ENCODE measurements at regions of chr17 and their contacts with region 1.

Region 1: GRCh38 chr17:51097708-51098446 is 22.8 kb downstream of the SPAG9 start:
- DNase-seq: no peak
- ATAC-seq: peak; percentile 37
- H3K4me3 Mint-ChIP-seq: no peak overlapping the region
- H3K27ac Mint-ChIP-seq: no peak overlapping the region
- H3K4me1 Mint-ChIP-seq: peaks cover 30% of the 10 kb centered on the region
- H3K27me3 Mint-ChIP-seq: no peaks in the 10 kb centered on the region

Region 2: GRCh38 chr17:50841949-50842354 is 255.9 kb before region 1 on chr17:
- CTCF ChIA-PET with region 1: no interaction called
- POLR2A ChIA-PET with region 1: no interaction called
- intact Hi-C with region 1: no loop called
- DNase-seq: peak; percentile 77
- ATAC-seq: peak; percentile 85
- H3K4me3 Mint-ChIP-seq: no peak overlapping the region
- H3K27ac Mint-ChIP-seq: no peak overlapping the region
- H3K4me1 Mint-ChIP-seq: no peaks in the 10 kb centered on the region
- H3K27me3 Mint-ChIP-seq: no peaks in the 10 kb centered on the region

Region 3: DNA sequence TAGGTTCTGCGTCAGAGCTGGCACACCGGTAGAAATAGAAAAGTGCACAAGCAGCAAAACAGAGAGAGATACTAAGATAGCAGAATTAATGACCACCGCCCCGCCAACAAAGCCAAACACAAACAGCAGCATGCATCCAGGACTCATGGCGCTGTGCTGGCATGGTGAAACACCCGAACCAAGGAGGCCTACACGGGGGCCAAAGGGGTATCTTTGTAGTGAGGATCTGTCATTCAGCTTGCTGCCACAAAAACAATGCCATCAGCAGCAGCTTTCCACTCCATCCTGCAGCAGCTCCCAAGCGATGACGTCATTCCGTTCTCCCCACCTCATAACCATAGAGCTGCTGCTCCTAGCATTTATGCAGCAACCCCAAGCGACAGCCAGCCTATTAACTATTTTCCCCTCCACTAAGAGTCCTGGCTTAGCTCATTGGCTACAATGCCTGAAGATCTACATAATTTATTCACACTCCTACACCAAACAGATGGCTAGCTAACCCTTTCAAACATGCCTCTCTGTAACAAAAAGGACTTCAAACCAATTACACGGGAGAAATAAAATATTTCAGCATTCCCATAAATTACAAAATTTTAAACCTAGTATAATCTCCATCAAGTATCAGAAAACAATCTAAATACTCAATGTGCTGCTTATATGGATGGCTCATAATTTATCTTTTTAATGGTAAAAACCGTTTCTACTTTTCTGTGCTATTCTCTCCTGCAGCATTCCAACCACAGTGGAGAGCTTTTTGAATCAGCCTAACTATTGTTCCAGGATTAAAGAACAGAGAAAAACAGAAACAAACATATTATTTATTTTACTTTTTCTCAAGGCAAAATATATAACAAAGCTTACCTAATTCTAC is 51.1 kb before region 1 on chr17:
- CTCF ChIA-PET with region 1: no interaction called
- POLR2A ChIA-PET with region 1: no interaction called
- intact Hi-C with region 1: loop called in 1 of 2 experiments (anchors 10 kb)
- DNase-seq: no peak
- ATAC-seq: no peak
- H3K4me3 Mint-ChIP-seq: no peak overlapping the region
- H3K27ac Mint-ChIP-seq: no peak overlapping the region
- H3K4me1 Mint-ChIP-seq: peaks cover 2% of the 10 kb centered on the region
- H3K27me3 Mint-ChIP-seq: no peaks in the 10 kb centered on the region

Region 4: DNA sequence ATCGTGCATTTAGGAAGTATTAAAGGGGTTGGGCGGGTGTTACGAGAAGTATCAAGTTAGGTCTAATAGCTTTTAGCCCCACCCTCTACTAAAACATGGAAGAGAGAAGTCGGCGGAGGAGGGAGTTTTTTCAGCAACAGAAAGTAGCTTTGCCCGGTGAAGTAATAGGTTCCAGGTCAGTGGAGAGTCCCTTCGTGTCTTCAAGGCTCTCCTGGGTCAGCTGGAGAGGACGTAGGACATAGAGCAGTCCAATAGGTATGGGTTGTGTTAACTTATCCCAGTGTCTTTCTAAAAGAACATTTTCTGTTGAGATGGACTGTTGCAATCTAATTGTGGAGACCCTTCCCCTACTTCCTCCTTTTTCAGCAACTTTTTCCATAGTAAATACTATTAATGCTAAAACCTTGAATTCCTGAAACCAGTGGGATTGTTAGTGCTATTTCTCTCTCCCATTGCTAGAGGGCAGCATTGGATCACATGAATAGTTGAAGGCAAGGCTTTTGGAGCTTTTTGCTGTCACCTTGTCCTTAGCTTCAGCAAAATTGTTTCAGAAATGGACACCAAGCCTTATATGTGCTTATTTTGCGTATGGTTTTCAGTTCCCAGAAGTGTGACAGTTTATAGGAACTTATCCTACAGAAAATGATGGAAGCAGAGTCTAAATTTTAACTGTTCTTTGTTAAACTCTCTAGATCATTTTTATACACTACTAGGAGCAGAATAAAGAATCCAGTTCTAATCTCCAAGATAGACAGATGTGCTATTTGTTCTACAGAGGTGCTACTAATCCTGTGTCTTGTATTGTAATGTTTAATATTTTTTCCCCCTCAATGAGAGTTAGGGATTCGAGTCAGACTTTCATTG is 200.9 kb after region 1 on chr17:
- CTCF ChIA-PET with region 1: no interaction called
- POLR2A ChIA-PET with region 1: no interaction called
- intact Hi-C with region 1: no loop called
- DNase-seq: no peak
- ATAC-seq: peak; percentile 39
- H3K4me3 Mint-ChIP-seq: no peak overlapping the region
- H3K27ac Mint-ChIP-seq: no peak overlapping the region
- H3K4me1 Mint-ChIP-seq: peaks cover 2% of the 10 kb centered on the region
- H3K27me3 Mint-ChIP-seq: no peaks in the 10 kb centered on the region